ENCODE measurements at regions of chr2 and their contacts with region 1.

Region 1: DNA sequence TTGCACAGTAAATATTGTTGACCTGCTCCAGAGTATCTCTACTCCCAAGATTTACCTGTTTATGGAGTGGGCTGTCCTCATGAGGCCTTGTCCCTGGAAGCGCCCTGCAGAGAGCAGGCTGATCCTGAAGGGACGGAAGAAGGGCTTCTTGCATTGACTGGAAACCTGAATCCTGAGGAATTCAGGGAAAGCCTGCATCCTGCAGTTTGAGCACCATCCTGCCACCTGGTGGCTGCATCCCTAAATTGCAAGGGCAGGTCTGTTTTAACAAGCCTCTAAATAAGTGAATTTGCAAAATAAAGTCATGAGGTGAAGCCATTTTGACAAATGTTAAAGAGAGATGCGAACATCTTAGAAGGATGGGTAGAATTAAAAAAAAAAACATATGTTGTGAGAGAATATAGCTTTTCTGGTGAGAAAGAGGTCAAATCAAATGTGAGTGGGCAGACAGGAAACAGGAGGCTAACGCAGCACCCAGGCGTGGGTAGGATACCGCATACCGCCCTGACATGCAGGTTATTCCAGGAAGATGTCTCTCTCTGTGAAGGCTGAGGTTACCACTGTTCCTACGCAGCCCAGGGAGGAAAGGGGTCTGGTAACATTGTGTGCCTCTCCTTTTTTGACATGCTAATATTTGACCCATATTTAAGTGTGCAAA is 754.9 kb downstream of the RNF144A start:
- DNase-seq: peak; percentile 93
- ATAC-seq: peak; percentile 98
- H3K4me3 Mint-ChIP-seq: no peak overlapping the region
- H3K27ac Mint-ChIP-seq: no peak overlapping the region; the same call in 1 of the 2 replicates
- H3K4me1 Mint-ChIP-seq: peaks cover 27% of the 10 kb centered on the region
- H3K27me3 Mint-ChIP-seq: peaks cover 5% of the 10 kb centered on the region; the same call in 1 of the 2 replicates
- CTCF ChIP-seq: peak; percentile 86

Region 2: GRCh38 chr2:7427293-7428060 is 244.7 kb before region 1 on chr2:
- CTCF ChIA-PET with region 1: interaction called, 17 read pairs
- POLR2A ChIA-PET with region 1: no interaction called
- DNase-seq: no peak
- ATAC-seq: no peak
- H3K4me3 Mint-ChIP-seq: no peak overlapping the region
- H3K27ac Mint-ChIP-seq: no peak overlapping the region
- H3K4me1 Mint-ChIP-seq: peaks cover 42% of the 10 kb centered on the region
- H3K27me3 Mint-ChIP-seq: no peaks in the 10 kb centered on the region; the same call in 1 of the 2 replicates
- CTCF ChIP-seq: peak; percentile 65

Region 3: GRCh38 chr2:7584017-7584416 is 88.1 kb before region 1 on chr2:
- CTCF ChIA-PET with region 1: no interaction called
- POLR2A ChIA-PET with region 1: no interaction called
- DNase-seq: no peak
- ATAC-seq: no peak
- H3K4me3 Mint-ChIP-seq: no peak overlapping the region
- H3K27ac Mint-ChIP-seq: no peak overlapping the region
- H3K4me1 Mint-ChIP-seq: peaks cover 11% of the 10 kb centered on the region
- H3K27me3 Mint-ChIP-seq: peaks cover 12% of the 10 kb centered on the region
- CTCF ChIP-seq: no peak

Region 4: DNA sequence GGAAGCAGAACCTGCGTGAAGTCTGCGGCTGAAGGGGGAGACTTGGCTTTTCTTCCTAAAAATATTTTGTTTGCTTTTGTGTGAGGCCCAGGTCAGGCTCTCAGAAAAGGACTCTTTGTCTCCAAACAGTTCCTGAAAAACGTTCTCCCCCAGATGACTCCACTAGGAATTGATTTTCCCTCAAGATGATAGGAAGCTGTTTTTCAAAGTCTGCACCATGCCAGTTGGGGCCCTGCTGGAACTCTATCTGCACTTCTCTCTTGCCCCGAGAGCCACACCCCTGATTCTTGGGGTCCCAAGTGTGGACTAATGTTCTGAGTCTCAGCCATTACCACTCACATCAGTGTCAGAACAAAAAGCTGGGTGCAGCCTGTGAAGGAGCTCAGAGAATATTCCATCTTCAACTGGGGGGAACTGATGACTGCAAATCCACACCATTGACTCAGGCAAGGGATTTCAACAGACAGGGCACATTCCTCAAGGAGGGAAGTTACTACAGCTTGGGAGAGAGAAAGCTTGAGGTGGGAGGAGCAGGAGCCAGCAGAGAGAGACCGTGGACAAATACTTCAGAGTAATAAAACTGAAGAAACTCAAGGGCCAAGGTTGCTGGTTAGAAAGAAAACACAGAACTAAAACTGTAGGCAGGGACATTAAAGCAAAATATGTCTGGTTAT is 13.3 kb after region 1 on chr2:
- CTCF ChIA-PET with region 1: no interaction called
- POLR2A ChIA-PET with region 1: no interaction called
- DNase-seq: no peak
- ATAC-seq: peak; percentile 58
- H3K4me3 Mint-ChIP-seq: no peak overlapping the region
- H3K27ac Mint-ChIP-seq: no peak overlapping the region
- H3K4me1 Mint-ChIP-seq: peaks cover 18% of the 10 kb centered on the region
- H3K27me3 Mint-ChIP-seq: peaks cover 4% of the 10 kb centered on the region; the same call in 1 of the 2 replicates
- CTCF ChIP-seq: no peak

Region 5: DNA sequence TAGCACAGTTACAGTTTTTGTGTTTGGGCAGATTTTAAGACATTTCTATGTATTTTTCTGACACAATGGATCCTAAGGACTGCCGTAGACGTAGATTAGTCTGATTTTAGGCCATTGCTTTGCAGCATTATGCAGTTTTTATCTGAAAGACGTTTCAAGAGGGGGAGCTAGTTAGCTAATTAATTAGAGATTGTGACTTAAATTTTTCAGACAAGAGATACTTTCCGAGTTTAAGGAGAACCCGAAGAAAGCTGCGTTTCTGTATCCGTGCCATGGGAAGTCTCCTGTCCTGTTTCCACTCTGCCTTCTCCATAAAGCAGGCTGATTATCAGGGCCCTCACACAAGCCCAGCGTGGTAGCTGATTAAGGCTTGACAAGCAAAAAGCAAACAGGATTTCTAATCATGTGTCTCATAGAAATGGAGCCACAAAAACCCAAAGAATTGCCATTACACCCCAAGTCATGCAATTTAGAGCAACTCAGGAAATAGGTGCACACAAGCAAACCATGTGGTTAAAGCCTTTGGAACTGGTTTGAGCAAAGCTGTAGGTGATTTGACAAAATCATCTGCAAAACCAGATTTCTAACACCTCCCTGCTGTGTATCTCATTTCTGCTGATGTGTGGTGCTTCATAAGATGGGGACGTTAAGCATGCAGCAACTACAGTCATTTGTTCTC is 53.2 kb after region 1 on chr2:
- CTCF ChIA-PET with region 1: no interaction called
- POLR2A ChIA-PET with region 1: no interaction called
- DNase-seq: no peak
- ATAC-seq: no peak
- H3K4me3 Mint-ChIP-seq: no peak overlapping the region
- H3K27ac Mint-ChIP-seq: no peak overlapping the region
- H3K4me1 Mint-ChIP-seq: peaks cover 34% of the 10 kb centered on the region
- H3K27me3 Mint-ChIP-seq: no peaks in the 10 kb centered on the region
- CTCF ChIP-seq: no peak